Activated T-helper 2 cell treated with anti-CD3 and anti-CD28 coated beads, Interferon-gamma antibody, Interleukin-2, Interleukin-4, amounts not matched to agents 10 μg/mL and 5 μg/mL and 100 μg/mL, durations not matched to agents 14 hours and 24 hours and 36 hours (primary cell): ENCODE measurements at regions of chr21 and their contacts with region 1.

Region 1: GRCh38 chr21:15051644-15052458 is 12.9 kb downstream of the NRIP1 start:
- DNase-seq: no peak
- H3K4me3 Mint-ChIP-seq: peak overlapping the region; percentile 67
- H3K27ac Mint-ChIP-seq: peak overlapping the region; percentile 75
- H3K4me1 Mint-ChIP-seq: peaks cover 39% of the 10 kb centered on the region
- H3K27me3 Mint-ChIP-seq: no peaks in the 10 kb centered on the region

Region 2: GRCh38 chr21:14901482-14901958 is 150.3 kb before region 1 on chr21:
- intact Hi-C with region 1: loop called (anchors 5 kb)
- DNase-seq: no peak
- H3K4me3 Mint-ChIP-seq: no peak overlapping the region
- H3K27ac Mint-ChIP-seq: peak overlapping the region; percentile 52
- H3K4me1 Mint-ChIP-seq: peaks cover 12% of the 10 kb centered on the region
- H3K27me3 Mint-ChIP-seq: no peaks in the 10 kb centered on the region

Region 3: DNA sequence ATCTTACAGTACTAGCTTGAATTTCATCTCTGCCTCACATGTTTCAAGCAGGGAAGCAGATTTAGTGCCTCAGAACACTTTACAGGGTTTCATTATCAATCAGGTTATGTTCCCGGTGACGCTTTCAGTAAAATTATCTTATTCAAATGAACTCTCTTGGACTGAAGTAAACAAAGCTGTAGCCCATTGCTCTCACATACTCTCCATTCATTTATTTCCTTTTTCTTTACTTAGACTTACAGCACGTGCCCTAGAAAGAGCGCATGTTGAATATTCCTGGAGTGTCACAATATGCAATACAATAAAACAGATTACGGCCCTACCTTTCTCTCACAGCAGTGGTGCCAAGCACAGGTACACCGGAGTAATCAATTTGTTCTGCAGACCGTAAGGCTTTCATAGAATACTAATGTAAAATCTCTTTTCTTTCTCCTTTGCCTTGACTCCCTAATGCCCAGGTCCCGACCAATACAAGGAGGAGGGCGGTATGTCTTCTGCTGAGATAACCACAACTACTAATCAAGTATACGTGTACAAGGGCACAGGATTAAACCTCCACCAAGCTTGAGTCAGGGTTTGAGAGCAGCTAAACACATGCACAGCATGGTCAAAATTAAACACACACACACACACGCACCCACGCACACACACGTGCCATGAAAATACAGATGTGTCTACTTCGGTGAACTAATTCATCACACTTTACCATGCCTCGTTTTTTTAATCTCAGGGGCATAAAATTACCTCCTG is 49.8 kb before region 1 on chr21:
- intact Hi-C with region 1: loop called (anchors 5 kb)
- DNase-seq: no peak
- H3K4me3 Mint-ChIP-seq: no peak overlapping the region
- H3K27ac Mint-ChIP-seq: no peak overlapping the region
- H3K4me1 Mint-ChIP-seq: peaks cover 37% of the 10 kb centered on the region
- H3K27me3 Mint-ChIP-seq: no peaks in the 10 kb centered on the region